ENCODE measurements at regions of chr2 and their contacts with region 1.

Region 1: DNA sequence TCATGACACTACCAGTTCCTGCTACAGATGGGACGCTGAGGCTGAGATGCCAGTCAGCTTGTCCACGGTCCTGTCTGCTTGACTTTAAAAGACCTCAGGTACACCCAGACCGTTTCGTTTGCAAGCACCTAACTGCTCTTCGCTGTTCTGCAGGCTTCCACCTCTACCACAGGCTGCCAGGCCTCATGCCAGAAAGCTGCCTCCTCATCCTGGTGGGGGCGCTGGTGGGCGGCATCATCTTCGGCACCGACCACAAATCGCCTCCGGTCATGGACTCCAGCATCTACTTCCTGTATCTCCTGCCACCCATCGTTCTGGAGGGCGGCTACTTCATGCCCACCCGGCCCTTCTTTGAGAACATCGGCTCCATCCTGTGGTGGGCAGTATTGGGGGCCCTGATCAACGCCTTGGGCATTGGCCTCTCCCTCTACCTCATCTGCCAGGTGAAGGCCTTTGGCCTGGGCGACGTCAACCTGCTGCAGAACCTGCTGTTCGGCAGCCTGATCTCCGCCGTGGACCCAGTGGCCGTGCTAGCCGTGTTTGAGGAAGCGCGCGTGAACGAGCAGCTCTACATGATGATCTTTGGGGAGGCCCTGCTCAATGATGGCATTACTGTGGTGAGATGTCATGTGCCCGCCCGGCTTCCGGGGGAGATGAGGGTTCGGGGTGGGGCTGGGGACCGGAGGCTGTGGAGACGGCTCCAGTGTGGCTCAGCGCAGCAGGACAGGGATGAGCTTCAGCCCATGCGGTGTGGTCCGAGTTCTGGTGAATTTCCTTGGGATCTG is 5.9 kb downstream of the SLC9A4 start:
- DNase-seq: no peak
- H3K4me3 ChIP-seq: no peak overlapping the region
- H3K4me3 Mint-ChIP-seq: no peak overlapping the region
- H3K27ac ChIP-seq: no peak overlapping the region
- H3K27ac Mint-ChIP-seq: peak overlapping the region in 2 of 7 donors; percentile 17 to 20
- H3K4me1 ChIP-seq: no peaks in the 10 kb centered on the region
- H3K4me1 Mint-ChIP-seq: no peaks in the 10 kb centered on the region
- H3K27me3 ChIP-seq: no peaks in the 10 kb centered on the region
- H3K27me3 Mint-ChIP-seq: peaks cover 8 to 13% of the 10 kb centered on the region in 2 donors

Region 2: GRCh38 chr2:102467514-102467913 is 11.4 kb before region 1 on chr2:
- CTCF ChIA-PET with region 1: interaction called, 15 read pairs
- POLR2A ChIA-PET with region 1: no interaction called
- intact Hi-C with region 1: no loop called
- DNase-seq: no peak
- H3K4me3 ChIP-seq: no peak overlapping the region
- H3K4me3 Mint-ChIP-seq: no peak overlapping the region
- H3K27ac ChIP-seq: no peak overlapping the region
- H3K27ac Mint-ChIP-seq: no peak overlapping the region
- H3K4me1 ChIP-seq: no peaks in the 10 kb centered on the region
- H3K4me1 Mint-ChIP-seq: no peaks in the 10 kb centered on the region
- H3K27me3 ChIP-seq: no peaks in the 10 kb centered on the region
- H3K27me3 Mint-ChIP-seq: peaks cover 16 to 22% of the 10 kb centered on the region in 2 donors

Region 3: GRCh38 chr2:102686479-102687439 is 207.9 kb after region 1 on chr2:
- CTCF ChIA-PET with region 1: no interaction called
- POLR2A ChIA-PET with region 1: no interaction called
- intact Hi-C with region 1: no loop called
- DNase-seq: no peak
- H3K4me3 ChIP-seq: no peak overlapping the region
- H3K4me3 Mint-ChIP-seq: no peak overlapping the region
- H3K27ac ChIP-seq: no peak overlapping the region
- H3K27ac Mint-ChIP-seq: no peak overlapping the region
- H3K4me1 ChIP-seq: peaks cover 8% of the 10 kb centered on the region
- H3K4me1 Mint-ChIP-seq: no peaks in the 10 kb centered on the region
- H3K27me3 ChIP-seq: no peaks in the 10 kb centered on the region
- H3K27me3 Mint-ChIP-seq: peaks cover 0 to 6% of the 10 kb centered on the region in 2 donors